Dendritic cell treated with granulocyte-macrophage colony-stimulating factor and Interleukin-4, amounts not matched to agents 40 ng/mL and 50 ng/mL, for 4 days (primary cell): ENCODE measurements at regions of chr11 and their contacts with region 1.

Region 1: DNA sequence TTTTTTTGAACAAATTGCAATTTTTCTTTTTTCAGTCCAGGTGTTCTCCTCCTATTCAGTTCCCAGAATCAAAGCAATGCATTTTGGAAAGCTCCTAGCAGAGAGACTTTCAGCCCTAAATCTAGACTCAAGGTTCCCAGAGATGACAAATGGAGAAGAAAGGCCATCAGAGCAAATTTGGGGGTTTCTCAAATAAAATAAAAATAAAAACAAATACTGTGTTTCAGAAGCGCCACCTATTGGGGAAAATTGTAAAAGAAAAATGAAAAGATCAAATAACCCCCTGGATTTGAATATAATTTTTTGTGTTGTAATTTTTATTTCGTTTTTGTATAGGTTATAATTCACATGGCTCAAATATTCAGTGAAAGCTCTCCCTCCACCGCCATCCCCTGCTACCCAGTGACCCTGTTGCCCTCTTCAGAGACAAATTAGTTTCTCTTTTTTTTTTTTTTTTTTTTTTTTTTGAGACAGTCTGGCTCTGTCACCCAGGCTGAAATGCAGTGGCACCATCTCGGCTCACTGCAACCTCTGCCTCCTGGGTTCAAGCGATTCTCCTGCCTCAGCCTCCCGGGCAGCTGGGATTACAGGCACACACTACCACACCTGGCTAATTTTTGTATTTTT is 6.2 kb upstream of the UBE4A start:
- H3K4me3 Mint-ChIP-seq: no peak overlapping the region
- H3K27ac Mint-ChIP-seq: no peak overlapping the region
- H3K4me1 Mint-ChIP-seq: no peaks in the 10 kb centered on the region
- H3K27me3 Mint-ChIP-seq: peaks cover 17% of the 10 kb centered on the region

Region 2: GRCh38 chr11:118198370-118198769 is 154.8 kb before region 1 on chr11:
- intact Hi-C with region 1: loop called (anchors 5 kb)
- H3K4me3 Mint-ChIP-seq: no peak overlapping the region
- H3K27ac Mint-ChIP-seq: peak overlapping the region; percentile 57
- H3K4me1 Mint-ChIP-seq: peaks cover 26% of the 10 kb centered on the region
- H3K27me3 Mint-ChIP-seq: no peaks in the 10 kb centered on the region

Region 3: DNA sequence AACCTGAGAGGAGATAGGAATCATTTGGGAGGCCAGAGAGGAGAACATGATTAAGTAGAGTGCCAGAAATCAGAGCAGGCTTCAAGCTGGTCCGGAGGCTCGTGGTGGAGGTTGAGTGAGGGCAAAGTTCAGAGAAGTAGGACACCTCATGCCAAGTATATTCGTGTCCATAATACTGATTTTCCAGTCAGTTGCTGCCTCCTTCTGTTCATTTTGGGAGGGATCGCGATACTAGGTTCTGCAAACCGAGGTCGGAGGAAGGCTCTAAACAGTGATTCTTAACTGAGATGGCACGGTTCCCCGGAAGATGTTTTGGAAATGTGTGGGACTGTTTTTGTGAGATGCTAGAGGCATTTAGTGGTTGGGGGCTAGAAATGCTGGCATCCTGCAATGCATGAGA is 62.3 kb before region 1 on chr11:
- intact Hi-C with region 1: loop called (anchors 1 kb)
- H3K4me3 Mint-ChIP-seq: no peak overlapping the region
- H3K27ac Mint-ChIP-seq: peak overlapping the region; percentile 21
- H3K4me1 Mint-ChIP-seq: peaks cover 37% of the 10 kb centered on the region
- H3K27me3 Mint-ChIP-seq: no peaks in the 10 kb centered on the region